HCT116 (cell line): ENCODE measurements at regions of chr15 and their contacts with region 1.

Region 1: DNA sequence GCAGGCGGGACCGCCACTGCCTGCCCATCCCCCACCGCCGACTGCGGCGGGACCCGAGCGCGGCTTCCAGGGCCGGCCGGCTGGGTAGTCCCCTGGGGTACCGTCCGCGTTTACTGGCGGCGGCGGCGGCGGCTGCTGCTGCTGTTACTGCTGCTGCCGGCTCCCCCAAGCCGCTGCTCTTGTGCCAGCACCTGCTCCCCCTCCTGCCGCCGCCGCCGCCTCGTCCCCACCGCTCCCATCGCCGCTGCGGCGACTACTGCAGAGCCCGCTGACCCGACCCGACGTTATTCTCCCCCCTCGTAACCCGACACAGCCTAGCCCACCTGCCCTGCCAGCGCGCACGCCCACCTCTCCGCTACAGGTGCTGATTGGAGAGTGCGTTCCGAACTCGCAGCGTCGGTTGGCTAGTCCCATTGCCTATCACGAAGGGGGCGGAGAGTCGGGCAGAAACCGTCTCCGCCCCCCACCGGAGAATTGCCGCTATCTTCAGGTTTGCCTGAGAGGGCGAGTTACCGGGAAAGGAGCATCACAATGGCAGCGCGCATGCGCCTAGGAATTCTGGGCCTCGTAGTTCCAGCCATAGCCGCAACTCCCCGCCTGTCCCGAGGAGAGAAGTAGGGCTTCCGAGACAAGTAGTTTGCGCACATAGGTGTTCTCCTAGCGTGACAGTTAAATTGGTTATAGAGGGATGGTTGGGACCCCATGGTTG is at the start of gene TTBK2:
- DNase-seq: peak; percentile 98
- ATAC-seq: peak; percentile 98
- H3K4me3 ChIP-seq: peak within 1 kb of the TSS; percentile 75
- H3K27ac ChIP-seq: peak within 1 kb of the TSS; percentile 46; the same call in 1 of the 2 replicates
- H3K4me1 ChIP-seq: peaks cover 5 to 15% of the 10 kb centered on the region in 2 experiments
- H3K27me3 ChIP-seq: no peaks in the 10 kb centered on the region
- CTCF ChIP-seq: no peak
- POLR2A ChIP-seq: peak; percentile 30
- RAD21 ChIP-seq: no peak
- total RNA-seq, gene TTBK2: 10.6 TPM

Region 2: DNA sequence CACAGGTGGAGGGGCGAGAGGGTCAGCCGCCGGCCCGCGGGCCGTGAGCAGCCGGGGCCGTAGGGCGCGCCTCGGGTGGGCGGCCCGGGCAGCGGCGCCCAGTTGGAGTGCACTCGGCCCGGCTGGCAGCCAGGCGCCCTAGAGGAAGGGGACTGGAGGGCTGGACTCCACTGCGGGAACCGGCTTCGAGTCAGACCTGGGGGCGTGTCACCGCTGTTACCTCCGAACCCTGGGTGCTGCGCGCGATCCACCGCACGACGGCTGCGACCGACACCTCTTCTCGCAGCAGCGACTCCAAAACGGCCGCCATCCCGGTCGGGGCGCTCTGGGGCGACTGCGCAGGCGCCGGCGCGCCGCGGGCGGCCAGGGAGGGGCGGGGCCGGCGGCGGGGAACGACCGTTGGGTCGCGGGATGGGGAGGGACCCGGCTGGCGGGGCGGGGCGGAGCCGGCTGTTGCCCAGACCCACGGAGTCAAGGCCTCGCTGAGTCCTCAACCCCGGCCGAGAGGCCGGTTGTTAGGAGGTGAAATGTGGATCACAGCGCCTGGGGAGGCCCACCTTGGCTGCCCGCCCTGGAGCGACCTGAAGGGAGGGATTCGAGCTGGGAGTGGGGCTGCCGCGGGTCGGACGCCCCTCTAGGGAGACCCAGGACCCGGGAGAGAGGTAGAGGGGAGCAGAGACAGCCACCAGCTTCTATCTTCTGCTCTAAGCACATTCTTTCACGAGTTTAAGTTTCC is 183.7 kb before region 1 on chr15 and contains the start of gene CDAN1:
- CTCF ChIA-PET with region 1: interaction called, 38 read pairs
- POLR2A ChIA-PET with region 1: no interaction called
- RAD21 ChIA-PET with region 1: no interaction called
- intact Hi-C with region 1: no loop called
- DNase-seq: peak; percentile 38
- ATAC-seq: peak; percentile 93
- H3K4me3 ChIP-seq: peak within 1 kb of the TSS; percentile 69 to 85
- H3K27ac ChIP-seq: peak within 1 kb of the TSS; percentile 88
- H3K4me1 ChIP-seq: peaks cover 12 to 16% of the 10 kb centered on the region in 2 experiments; a peak in 3 of 4 replicates
- H3K27me3 ChIP-seq: no peaks in the 10 kb centered on the region
- CTCF ChIP-seq: no peak
- POLR2A ChIP-seq: peak; percentile 69
- RAD21 ChIP-seq: no peak
- total RNA-seq, gene CDAN1: 22.4 TPM

Region 3: DNA sequence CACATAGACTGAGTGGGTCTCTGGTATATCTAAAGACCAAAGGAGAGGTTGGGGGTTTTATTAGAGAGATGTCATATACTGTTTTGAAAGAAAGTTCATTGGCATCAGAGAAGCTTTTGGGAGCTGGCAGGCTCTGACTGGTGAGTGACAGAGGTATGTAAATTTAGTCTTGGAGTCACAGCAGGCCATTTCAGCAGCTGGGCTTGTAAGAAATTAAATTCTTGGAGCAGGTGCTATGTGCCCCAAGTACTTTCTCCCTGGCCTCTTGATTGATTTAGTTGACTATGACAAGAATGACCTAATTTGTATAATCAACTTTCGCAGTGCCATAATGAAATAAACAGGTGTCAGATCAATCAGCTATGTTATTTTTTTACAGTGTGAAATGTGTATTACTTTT is 136.0 kb before region 1 on chr15:
- CTCF ChIA-PET with region 1: no interaction called
- POLR2A ChIA-PET with region 1: no interaction called
- RAD21 ChIA-PET with region 1: no interaction called
- intact Hi-C with region 1: no loop called
- DNase-seq: no peak
- ATAC-seq: no peak
- H3K4me3 ChIP-seq: no peak overlapping the region
- H3K27ac ChIP-seq: no peak overlapping the region
- H3K4me1 ChIP-seq: no peaks in the 10 kb centered on the region
- H3K27me3 ChIP-seq: no peaks in the 10 kb centered on the region
- CTCF ChIP-seq: no peak
- POLR2A ChIP-seq: no peak
- RAD21 ChIP-seq: no peak